ENCODE measurements at regions of chr1 and their contacts with region 1.

Region 1: GRCh38 chr1:165827268-165828102 is at the start of gene UCK2:
- H3K4me3 ChIP-seq: peak within 1 kb of the TSS; percentile 86
- H3K27ac ChIP-seq: peak within 1 kb of the TSS; percentile 83
- H3K4me1 ChIP-seq: no peaks in the 10 kb centered on the region
- CTCF ChIP-seq: peak; percentile 72

Region 2: GRCh38 chr1:165697881-165698760 is 129.4 kb before region 1 on chr1 and contains the start of gene ALDH9A1:
- CTCF ChIA-PET with region 1: interaction called, 4 read pairs
- POLR2A ChIA-PET with region 1: interaction called, 11 read pairs
- H3K4me3 ChIP-seq: peak within 1 kb of the TSS; percentile 83
- H3K27ac ChIP-seq: peak within 1 kb of the TSS; percentile 94
- H3K4me1 ChIP-seq: peaks cover 5% of the 10 kb centered on the region; the same call in 1 of the 2 replicates
- CTCF ChIP-seq: peak; percentile 89

Region 3: GRCh38 chr1:165707984-165708706 is 119.3 kb before region 1 on chr1:
- CTCF ChIA-PET with region 1: no interaction called
- POLR2A ChIA-PET with region 1: no interaction called
- H3K4me3 ChIP-seq: no peak overlapping the region
- H3K27ac ChIP-seq: no peak overlapping the region
- H3K4me1 ChIP-seq: no peaks in the 10 kb centered on the region
- CTCF ChIP-seq: no peak

Region 4: DNA sequence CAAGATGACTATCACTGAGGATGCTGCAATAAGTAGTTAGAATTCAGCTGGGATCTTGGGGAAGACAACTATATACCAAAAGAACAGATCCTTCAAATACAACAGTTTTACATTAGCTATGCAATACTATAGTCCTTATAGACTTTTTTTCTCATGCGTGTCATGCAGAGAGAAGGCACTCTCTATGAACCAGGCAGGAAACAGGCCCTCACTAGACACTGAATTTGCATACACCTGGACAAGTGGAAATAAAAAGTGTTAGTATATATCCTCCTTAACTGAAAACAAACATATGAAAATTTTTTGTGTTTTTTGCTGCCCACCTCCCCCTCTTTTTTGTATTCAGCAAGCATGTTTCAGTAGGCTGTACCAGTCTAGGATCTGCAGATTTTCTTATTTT is 88.7 kb before region 1 on chr1:
- CTCF ChIA-PET with region 1: no interaction called
- POLR2A ChIA-PET with region 1: no interaction called
- H3K4me3 ChIP-seq: no peak overlapping the region
- H3K27ac ChIP-seq: no peak overlapping the region
- H3K4me1 ChIP-seq: peaks cover 4% of the 10 kb centered on the region; the same call in 1 of the 2 replicates
- CTCF ChIP-seq: no peak

Region 5: GRCh38 chr1:165768513-165769394 is 58.7 kb before region 1 on chr1 and contains the start of gene TMCO1:
- CTCF ChIA-PET with region 1: interaction called, 3 read pairs
- POLR2A ChIA-PET with region 1: interaction called, 20 read pairs
- H3K4me3 ChIP-seq: peak within 1 kb of the TSS; percentile 58
- H3K27ac ChIP-seq: peak within 1 kb of the TSS; percentile 84
- H3K4me1 ChIP-seq: no peaks in the 10 kb centered on the region
- CTCF ChIP-seq: peak; percentile 47; the same call in 1 of the 2 replicates

Region 6: GRCh38 chr1:165914136-165914798 is 86.8 kb after region 1 on chr1:
- CTCF ChIA-PET with region 1: interaction called, 10 read pairs
- POLR2A ChIA-PET with region 1: interaction called, 3 read pairs
- H3K4me3 ChIP-seq: no peak overlapping the region
- H3K27ac ChIP-seq: no peak overlapping the region
- H3K4me1 ChIP-seq: no peaks in the 10 kb centered on the region
- CTCF ChIP-seq: peak; percentile 80